A673 (cell line): ENCODE measurements at regions of chr1 and their contacts with region 1.

Region 1: DNA sequence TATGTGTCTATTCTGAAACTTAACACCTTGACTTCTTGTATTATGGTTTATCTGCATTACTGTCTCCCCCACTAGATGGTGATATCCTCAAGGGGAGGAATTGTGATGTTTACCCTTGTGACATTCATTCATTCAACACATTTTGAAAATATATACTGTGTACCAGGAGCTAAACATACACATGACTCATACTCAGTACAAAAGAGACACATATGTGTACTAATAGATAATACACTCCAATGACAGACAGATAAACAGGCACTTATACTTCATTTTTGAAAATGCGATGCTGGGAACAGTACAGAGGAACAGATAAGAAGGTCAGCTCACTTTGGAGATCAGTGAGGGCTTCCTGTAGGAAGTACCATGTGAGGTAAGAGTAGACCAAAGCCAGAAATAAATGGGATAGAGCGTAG is 8.9 kb upstream of the RAB3GAP2 start:
- DNase-seq: peak; percentile 47
- H3K4me3 ChIP-seq: no peak overlapping the region
- H3K27ac ChIP-seq: no peak overlapping the region
- H3K4me1 ChIP-seq: no peaks in the 10 kb centered on the region
- H3K27me3 ChIP-seq: peaks cover 4% of the 10 kb centered on the region
- CTCF ChIP-seq: peak; percentile 62

Region 2: DNA sequence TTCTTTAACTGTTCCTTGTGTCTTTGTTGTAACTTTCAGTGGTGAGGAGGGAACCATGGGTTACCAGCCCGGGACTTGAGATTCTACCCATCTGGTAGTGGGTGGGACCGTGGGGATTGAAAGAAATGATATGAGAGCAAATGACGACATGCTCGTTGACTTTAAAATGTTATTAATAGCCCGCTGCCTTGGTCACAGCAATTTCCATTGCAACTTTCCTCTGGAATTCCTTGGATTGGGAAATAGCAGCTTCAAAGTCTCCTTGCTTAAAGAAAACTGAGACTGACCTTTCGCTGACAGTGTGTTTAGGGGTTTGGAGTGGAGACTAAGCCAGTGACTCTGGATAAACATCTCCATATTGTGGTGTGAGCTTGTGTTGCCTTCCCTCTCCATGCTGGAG is 202.5 kb after region 1 on chr1:
- CTCF ChIA-PET with region 1: no interaction called
- POLR2A ChIA-PET with region 1: no interaction called
- intact Hi-C with region 1: no loop called
- DNase-seq: no peak
- H3K4me3 ChIP-seq: no peak overlapping the region
- H3K27ac ChIP-seq: no peak overlapping the region
- H3K4me1 ChIP-seq: no peaks in the 10 kb centered on the region
- H3K27me3 ChIP-seq: no peaks in the 10 kb centered on the region
- CTCF ChIP-seq: no peak

Region 3: GRCh38 chr1:220680085-220680687 is 399.0 kb after region 1 on chr1:
- CTCF ChIA-PET with region 1: no interaction called
- POLR2A ChIA-PET with region 1: no interaction called
- intact Hi-C with region 1: loop called (anchors 5 kb)
- DNase-seq: peak; percentile 42
- H3K4me3 ChIP-seq: no peak overlapping the region
- H3K27ac ChIP-seq: no peak overlapping the region
- H3K4me1 ChIP-seq: no peaks in the 10 kb centered on the region
- H3K27me3 ChIP-seq: no peaks in the 10 kb centered on the region
- CTCF ChIP-seq: peak; percentile 70